ENCODE measurements at regions of chr6 and their contacts with region 1.

Region 1: DNA sequence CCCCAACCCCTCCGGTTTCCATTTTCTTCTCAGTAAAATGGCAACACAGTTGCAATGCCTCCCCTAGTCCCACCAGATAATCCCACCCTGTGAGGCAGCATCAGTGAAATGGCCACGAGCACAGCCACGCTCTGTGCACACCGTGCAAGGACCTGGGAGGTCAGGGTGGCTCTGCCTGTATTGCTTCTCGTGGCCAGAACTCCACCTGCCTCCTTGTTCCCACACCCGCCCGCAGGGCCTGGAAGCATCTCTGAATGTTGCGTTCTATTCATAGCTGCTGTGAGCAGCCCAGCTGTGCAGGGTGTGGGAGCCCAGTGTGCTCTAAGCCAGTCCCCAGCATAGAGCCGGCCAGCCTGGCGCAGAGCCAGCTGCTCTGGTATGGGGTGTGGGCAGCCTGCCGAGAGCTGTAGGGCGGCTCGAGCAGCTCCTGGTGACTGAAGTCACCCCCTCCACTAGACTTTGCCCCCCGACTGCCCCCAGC is 161.1 kb downstream of the DLL1 start:
- DNase-seq: peak; percentile 75 to 80
- ATAC-seq: peak; percentile 80 to 94 (median 88)
- H3K4me3 ChIP-seq: no peak overlapping the region
- H3K27ac ChIP-seq: peak overlapping the region in 6 of 10 donors; percentile 44 to 77 (median 64)
- H3K4me1 ChIP-seq: peaks cover 6 to 50% (median 29%) of the 10 kb centered on the region in 9 donors
- H3K27me3 ChIP-seq: no peaks in the 10 kb centered on the region
- CTCF ChIP-seq: no peak

Region 2: DNA sequence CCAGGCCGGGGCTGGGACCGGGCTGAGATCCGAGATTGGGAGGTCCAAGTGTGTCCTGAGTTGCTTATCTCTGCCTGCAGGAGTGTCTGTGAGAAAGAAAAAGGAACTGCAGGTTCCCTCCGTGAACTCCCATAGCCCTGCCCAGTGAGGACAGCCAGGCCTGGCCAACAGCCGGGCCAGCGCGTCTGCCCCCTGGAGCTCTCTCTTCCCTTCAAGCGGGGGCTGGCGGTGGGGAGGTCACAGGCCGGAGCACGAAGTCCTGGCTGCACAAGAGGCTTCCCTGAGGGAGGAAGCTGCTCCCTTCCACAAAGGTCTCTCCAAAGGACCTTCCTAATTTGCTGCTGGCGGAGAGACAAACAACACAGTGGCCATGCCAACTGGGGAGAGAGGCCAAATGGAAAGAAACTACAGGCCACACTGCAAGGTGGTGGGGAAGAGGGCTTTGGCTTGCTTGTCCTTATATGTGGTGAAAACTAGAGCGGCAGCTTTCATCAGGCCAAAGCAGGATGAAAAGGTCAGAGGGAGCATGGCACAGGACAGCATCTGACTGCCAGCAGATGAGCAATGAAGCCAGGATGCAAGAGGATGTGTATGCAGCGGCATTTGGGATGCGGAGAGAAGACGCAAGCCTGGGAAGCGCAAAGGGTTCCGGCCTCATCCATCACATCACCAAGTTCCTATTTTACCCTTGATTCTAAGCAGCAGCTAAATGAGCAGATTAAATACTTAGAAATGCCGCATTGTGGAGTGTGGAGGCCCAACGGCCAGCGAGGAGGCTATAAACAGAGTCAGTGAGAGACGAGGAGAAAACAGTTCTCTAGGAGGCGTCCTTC is 118.3 kb before region 1 on chr6:
- intact Hi-C with region 1: loop called in 1 of 10 experiments (anchors 5 kb)
- DNase-seq: peak; percentile 69 to 81
- ATAC-seq: peak; percentile 74 to 98 (median 92)
- H3K4me3 ChIP-seq: no peak overlapping the region
- H3K27ac ChIP-seq: peak overlapping the region; percentile 0 to 82 (median 61)
- H3K4me1 ChIP-seq: peaks cover 6 to 19% (median 15%) of the 10 kb centered on the region in 9 donors
- H3K27me3 ChIP-seq: peaks cover 0 to 7% (median 0%) of the 10 kb centered on the region in 7 donors
- CTCF ChIP-seq: peak in 1 of 9 donors; percentile 20

Region 3: DNA sequence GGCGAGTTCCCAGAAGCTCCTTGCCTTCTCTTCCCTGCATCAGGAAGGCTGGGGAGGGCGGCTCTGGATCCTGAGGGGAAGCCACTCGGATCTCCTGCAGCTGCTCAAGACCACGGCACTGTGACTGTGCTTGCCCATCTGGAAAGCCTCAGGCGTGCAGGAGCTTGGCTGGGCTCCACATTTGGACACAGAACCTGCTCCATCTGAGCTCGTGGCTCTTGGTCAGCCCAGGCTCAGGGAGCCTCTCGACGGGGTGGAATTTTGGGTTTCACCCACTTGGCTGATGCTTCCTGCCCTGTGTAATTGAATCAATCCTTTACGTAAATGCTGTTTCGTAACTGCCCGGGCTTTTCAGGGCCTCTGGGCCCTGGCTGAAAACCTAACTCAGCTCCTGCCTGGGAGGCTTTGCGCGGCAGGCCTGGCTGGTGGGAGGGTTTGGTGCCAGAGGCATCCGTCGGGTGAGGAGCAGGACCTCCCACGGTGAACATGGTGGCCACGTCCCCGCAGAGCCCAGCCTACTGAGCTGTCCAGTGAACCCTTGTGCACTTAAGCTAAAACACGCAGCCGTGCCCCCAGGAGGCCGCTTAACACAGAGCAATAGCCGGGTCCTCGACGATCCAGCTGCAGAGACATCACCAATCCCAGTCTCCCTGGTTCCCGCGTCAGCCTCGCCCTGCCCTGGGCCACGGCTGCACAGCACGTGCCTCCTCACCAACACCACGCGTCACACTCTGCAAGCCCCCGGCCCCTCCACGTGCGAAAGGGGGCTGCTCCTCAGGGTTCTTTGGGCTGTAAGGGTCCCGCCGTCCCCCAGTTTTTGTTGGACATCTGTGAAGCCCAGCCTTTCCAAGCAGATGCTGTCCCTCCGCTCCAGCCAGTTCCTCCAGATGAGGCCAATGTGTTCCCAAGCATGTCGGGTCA is 79.8 kb before region 1 on chr6:
- intact Hi-C with region 1: loop called in 4 of 10 experiments (anchors 5 to 10 kb)
- DNase-seq: peak; percentile 77 to 85
- ATAC-seq: peak; percentile 81 to 92 (median 88)
- H3K4me3 ChIP-seq: no peak overlapping the region
- H3K27ac ChIP-seq: peak overlapping the region in 9 of 10 donors; percentile 35 to 84 (median 44)
- H3K4me1 ChIP-seq: peaks cover 0 to 44% (median 11%) of the 10 kb centered on the region in 9 donors
- H3K27me3 ChIP-seq: peaks cover 0 to 6% (median 0%) of the 10 kb centered on the region in 7 donors
- CTCF ChIP-seq: no peak